GM10248 (cell line): ENCODE measurements at regions of chr18 and their contacts with region 1.

Region 1: GRCh38 chr18:77054606-77055428 is 77.8 kb downstream of the MBP start:
- DNase-seq: peak; percentile 84
- CTCF ChIP-seq: peak; percentile 89

Region 2: DNA sequence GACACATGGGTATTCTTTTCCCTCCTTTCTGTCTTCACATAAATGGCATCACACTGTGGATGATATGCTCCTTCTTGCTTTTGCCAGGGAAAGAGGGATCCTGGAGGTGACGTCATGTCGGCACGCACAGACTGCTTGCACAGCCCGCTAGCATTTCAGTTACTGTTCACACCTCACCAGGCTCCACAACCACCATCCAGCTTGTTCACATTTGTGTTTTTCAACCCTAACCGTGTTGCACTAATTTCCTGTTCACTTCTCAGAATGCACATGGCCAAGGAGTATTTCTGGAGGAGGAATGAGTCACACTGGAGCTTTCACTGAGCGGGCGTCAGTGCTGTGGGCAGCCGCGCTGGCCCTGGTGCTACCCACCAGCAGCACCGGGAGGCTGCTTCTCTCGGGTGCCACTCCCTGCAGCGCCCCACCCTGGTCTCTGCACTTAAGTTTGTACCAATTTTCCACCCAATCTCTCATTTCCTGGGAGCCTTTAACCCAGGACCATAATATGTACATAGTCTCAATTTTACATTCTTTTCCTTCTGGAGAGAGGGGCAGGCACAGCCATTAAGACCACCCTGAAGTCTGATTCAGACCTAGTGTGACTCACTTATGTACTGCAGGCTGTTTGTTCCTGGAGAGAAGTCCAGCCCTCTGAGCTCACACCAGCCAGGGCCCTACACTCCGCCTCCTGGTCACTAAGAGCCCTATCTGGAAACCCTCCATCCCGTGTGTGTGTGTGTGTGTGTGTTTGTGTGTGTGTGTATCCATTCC is 12.7 kb after region 1 on chr18:
- CTCF ChIA-PET with region 1: interaction called, 12 read pairs
- POLR2A ChIA-PET with region 1: no interaction called
- DNase-seq: no peak
- CTCF ChIP-seq: no peak